CD4-positive, alpha-beta T cell (primary cell): ENCODE measurements at regions of chr2 and their contacts with region 1.

Region 1: GRCh38 chr2:112666764-112667122 is 21.0 kb downstream of the SLC20A1 start:
- DNase-seq: no peak
- ATAC-seq: no peak
- H3K4me3 ChIP-seq: no peak overlapping the region
- H3K4me3 Mint-ChIP-seq: no peak overlapping the region
- H3K27ac ChIP-seq: no peak overlapping the region
- H3K27ac Mint-ChIP-seq: no peak overlapping the region
- H3K4me1 ChIP-seq: peaks cover 1% of the 10 kb centered on the region
- H3K4me1 Mint-ChIP-seq: no peaks in the 10 kb centered on the region
- H3K27me3 ChIP-seq: no peaks in the 10 kb centered on the region
- H3K27me3 Mint-ChIP-seq: no peaks in the 10 kb centered on the region
- CTCF ChIP-seq: no peak

Region 2: GRCh38 chr2:112634153-112634873 is 32.4 kb before region 1 on chr2:
- CTCF ChIA-PET with region 1: no interaction called
- POLR2A ChIA-PET with region 1: no interaction called
- intact Hi-C with region 1: loop called in 1 of 2 experiments (anchors 5 kb)
- DNase-seq: peak in 6 of 14 experiments; percentile 11 to 70 (median 54)
- ATAC-seq: peak; percentile 21
- H3K4me3 ChIP-seq: no peak overlapping the region
- H3K4me3 Mint-ChIP-seq: peak overlapping the region; percentile 50
- H3K27ac ChIP-seq: peak overlapping the region in 1 of 2 donors; percentile 47
- H3K27ac Mint-ChIP-seq: peak overlapping the region; percentile 71
- H3K4me1 ChIP-seq: peaks cover 78% of the 10 kb centered on the region
- H3K4me1 Mint-ChIP-seq: peaks cover 71% of the 10 kb centered on the region
- H3K27me3 ChIP-seq: no peaks in the 10 kb centered on the region
- H3K27me3 Mint-ChIP-seq: no peaks in the 10 kb centered on the region
- CTCF ChIP-seq: no peak